CD8-positive, alpha-beta memory T cell (primary cell): ENCODE measurements at regions of chr1 and their contacts with region 1.

Region 1: DNA sequence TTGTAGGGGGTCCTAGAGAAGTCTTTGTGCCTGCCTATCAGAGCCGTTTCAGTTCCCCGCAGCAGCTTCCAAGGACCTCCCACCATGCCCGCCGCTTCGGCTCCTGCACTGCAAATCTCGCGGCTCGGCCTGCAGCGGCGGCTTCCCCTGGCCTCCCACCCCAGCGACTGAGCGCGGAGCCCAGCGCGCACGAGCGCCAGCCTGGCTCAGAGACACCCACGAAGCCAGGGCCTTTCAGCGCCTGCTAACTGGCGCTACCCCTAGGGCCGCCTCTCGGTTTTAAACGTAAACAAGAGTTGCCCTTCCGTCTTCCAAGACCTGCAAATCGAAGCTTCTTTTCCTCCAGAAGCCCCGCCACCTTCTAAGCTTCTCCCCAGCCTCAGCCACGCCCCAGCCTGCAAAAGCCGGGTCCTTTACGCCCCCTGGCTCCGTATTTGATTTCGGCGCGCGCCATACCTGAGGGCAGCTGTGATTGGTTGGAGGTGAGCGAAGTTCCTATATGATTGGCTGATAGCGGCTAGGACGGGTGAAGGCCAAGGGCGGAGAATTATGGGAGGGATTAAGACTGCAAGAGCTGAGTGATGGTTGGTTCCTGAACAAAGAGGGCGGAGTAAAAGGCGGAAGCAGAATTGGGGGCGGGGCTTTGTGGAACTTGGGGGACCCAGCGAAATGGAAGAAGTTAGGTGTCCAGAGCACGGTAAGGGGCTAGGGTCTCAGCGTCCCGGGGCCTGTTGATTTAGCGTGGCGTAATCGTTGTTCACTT is at the start of gene TTF2:
- DNase-seq: peak; percentile 91 to 99 (median 98)
- H3K4me3 ChIP-seq: peak within 1 kb of the TSS; percentile 76
- H3K4me3 Mint-ChIP-seq: no peak within 1 kb of the TSS
- H3K27ac ChIP-seq: peak within 1 kb of the TSS; percentile 81
- H3K27ac Mint-ChIP-seq: peak within 1 kb of the TSS in 3 of 8 donors; percentile 64 to 90 (median 78)
- H3K4me1 ChIP-seq: peaks cover 10% of the 10 kb centered on the region
- H3K4me1 Mint-ChIP-seq: peaks cover 39 to 58% (median 56%) of the 10 kb centered on the region in 3 donors
- H3K27me3 ChIP-seq: no peaks in the 10 kb centered on the region
- H3K27me3 Mint-ChIP-seq: no peaks in the 10 kb centered on the region
- total RNA-seq, gene TTF2: 89.0 TPM

Region 2: GRCh38 chr1:116574581-116575291 is 485.1 kb before region 1 on chr1:
- CTCF ChIA-PET with region 1: interaction called, 13 read pairs
- POLR2A ChIA-PET with region 1: no interaction called
- DNase-seq: peak; percentile 16 to 61 (median 36)
- H3K4me3 ChIP-seq: no peak overlapping the region
- H3K4me3 Mint-ChIP-seq: peak overlapping the region in 1 of 7 donors; percentile 80
- H3K27ac ChIP-seq: no peak overlapping the region
- H3K27ac Mint-ChIP-seq: peak overlapping the region in 1 of 8 donors; percentile 29
- H3K4me1 ChIP-seq: peaks cover 9% of the 10 kb centered on the region
- H3K4me1 Mint-ChIP-seq: peaks cover 11 to 23% (median 21%) of the 10 kb centered on the region in 3 donors
- H3K27me3 ChIP-seq: no peaks in the 10 kb centered on the region
- H3K27me3 Mint-ChIP-seq: peaks cover 0 to 12% of the 10 kb centered on the region in 2 donors

Region 3: GRCh38 chr1:116724765-116725375 is 335.0 kb before region 1 on chr1:
- CTCF ChIA-PET with region 1: interaction called, 21 read pairs
- POLR2A ChIA-PET with region 1: no interaction called
- DNase-seq: peak; percentile 64 to 82 (median 68)
- H3K4me3 ChIP-seq: no peak overlapping the region
- H3K4me3 Mint-ChIP-seq: no peak overlapping the region
- H3K27ac ChIP-seq: no peak overlapping the region
- H3K27ac Mint-ChIP-seq: no peak overlapping the region
- H3K4me1 ChIP-seq: no peaks in the 10 kb centered on the region
- H3K4me1 Mint-ChIP-seq: peaks cover 16 to 27% (median 25%) of the 10 kb centered on the region in 3 donors
- H3K27me3 ChIP-seq: no peaks in the 10 kb centered on the region
- H3K27me3 Mint-ChIP-seq: no peaks in the 10 kb centered on the region

Region 4: DNA sequence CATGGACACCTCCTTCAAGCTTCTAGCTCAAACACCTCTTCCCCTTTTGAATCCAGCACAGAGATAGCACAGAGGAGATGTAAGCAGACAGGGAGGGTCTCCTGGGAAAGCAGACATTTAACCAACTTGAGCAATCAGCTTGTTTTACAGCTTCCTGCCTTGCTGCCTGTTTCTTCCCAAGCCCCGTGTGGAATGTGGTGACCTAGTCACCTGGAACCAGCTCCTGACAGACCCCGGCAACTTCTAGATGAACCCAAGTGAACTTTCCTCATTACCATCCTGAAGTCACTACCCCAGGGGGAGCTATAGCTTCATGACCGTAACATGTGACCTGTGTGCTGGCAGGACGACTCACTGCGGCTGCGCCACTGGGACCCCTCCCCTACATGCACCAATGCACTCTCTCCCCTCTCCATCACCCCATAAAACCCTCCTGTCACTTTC is 23.8 kb before region 1 on chr1:
- CTCF ChIA-PET with region 1: no interaction called
- POLR2A ChIA-PET with region 1: interaction called, 10 read pairs
- DNase-seq: no peak
- H3K4me3 ChIP-seq: no peak overlapping the region
- H3K4me3 Mint-ChIP-seq: no peak overlapping the region
- H3K27ac ChIP-seq: no peak overlapping the region
- H3K27ac Mint-ChIP-seq: no peak overlapping the region
- H3K4me1 ChIP-seq: no peaks in the 10 kb centered on the region
- H3K4me1 Mint-ChIP-seq: peaks cover 0 to 10% (median 0%) of the 10 kb centered on the region in 3 donors
- H3K27me3 ChIP-seq: no peaks in the 10 kb centered on the region
- H3K27me3 Mint-ChIP-seq: peaks cover 0 to 5% of the 10 kb centered on the region in 2 donors